Activated CD4-positive, alpha-beta T cell treated with anti-CD3 and anti-CD28 coated beads for 36 hours (primary cell): ENCODE measurements at regions of chr3 and their contacts with region 1.

Region 1: GRCh38 chr3:87260270-87260669 is 16.1 kb downstream of the POU1F1 start:
- DNase-seq: peak; percentile 62
- ATAC-seq: peak; percentile 44
- H3K4me3 Mint-ChIP-seq: no peak overlapping the region
- H3K27ac Mint-ChIP-seq: no peak overlapping the region
- H3K4me1 Mint-ChIP-seq: peaks cover 3% of the 10 kb centered on the region
- H3K27me3 Mint-ChIP-seq: no peaks in the 10 kb centered on the region

Region 2: DNA sequence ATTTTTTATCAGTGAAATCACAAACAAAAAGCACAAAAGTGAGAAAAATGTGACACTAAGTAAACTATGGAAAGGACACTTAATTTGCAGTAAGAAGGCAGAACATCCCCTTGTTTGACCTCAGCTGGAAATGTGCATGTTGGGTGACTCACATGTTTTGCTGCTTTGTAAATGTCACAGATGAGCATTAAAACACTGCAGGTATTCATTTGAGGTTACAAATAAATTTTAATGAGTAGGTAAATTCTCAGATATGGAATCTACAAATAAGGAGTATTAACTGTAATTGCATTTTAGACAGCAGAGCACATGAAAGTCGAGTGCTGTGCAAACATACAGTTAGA is 12.9 kb before region 1 on chr3:
- CTCF ChIA-PET with region 1: interaction called, 20 read pairs
- POLR2A ChIA-PET with region 1: no interaction called
- intact Hi-C with region 1: no loop called
- DNase-seq: no peak
- ATAC-seq: peak; percentile 26
- H3K4me3 Mint-ChIP-seq: no peak overlapping the region
- H3K27ac Mint-ChIP-seq: no peak overlapping the region
- H3K4me1 Mint-ChIP-seq: peaks cover 11% of the 10 kb centered on the region
- H3K27me3 Mint-ChIP-seq: no peaks in the 10 kb centered on the region

Region 3: DNA sequence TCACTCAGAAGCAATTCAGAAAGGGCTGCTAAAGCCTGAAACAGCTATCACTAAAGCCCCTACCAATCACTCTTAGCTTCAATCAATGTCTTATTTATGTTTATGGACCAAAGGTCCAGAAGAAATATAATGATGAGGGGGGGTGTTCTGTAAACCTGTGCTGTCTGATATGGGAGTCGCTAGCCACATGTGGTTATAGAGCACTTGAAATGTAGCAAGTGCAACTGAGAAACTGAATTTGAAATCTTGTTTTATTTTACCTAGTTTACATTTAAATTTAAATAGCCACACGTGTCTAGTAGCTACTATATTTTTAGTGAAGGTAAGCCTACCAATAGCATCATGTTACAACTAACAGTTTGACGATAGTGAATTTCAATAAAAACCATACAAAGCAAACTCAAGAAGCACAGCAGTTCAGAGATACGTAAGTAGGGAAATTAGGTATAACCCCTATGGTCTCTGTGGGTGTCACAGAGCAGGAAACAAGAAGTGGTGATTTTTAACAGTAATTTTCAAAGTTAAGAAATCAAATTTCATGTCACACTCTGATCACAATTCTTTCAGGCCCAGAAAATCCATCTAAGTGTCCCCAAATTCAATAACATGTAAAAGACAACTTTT is 12.6 kb after region 1 on chr3:
- CTCF ChIA-PET with region 1: interaction called, 28 read pairs
- POLR2A ChIA-PET with region 1: no interaction called
- intact Hi-C with region 1: no loop called
- DNase-seq: no peak
- ATAC-seq: peak; percentile 74
- H3K4me3 Mint-ChIP-seq: no peak overlapping the region
- H3K27ac Mint-ChIP-seq: no peak overlapping the region
- H3K4me1 Mint-ChIP-seq: peaks cover 26% of the 10 kb centered on the region
- H3K27me3 Mint-ChIP-seq: peaks cover 2% of the 10 kb centered on the region

Region 4: GRCh38 chr3:87307803-87308202 is 47.5 kb after region 1 on chr3:
- CTCF ChIA-PET with region 1: no interaction called
- POLR2A ChIA-PET with region 1: no interaction called
- intact Hi-C with region 1: no loop called
- DNase-seq: no peak
- ATAC-seq: no peak
- H3K4me3 Mint-ChIP-seq: no peak overlapping the region
- H3K27ac Mint-ChIP-seq: no peak overlapping the region
- H3K4me1 Mint-ChIP-seq: peaks cover 4% of the 10 kb centered on the region
- H3K27me3 Mint-ChIP-seq: peaks cover 8% of the 10 kb centered on the region

Region 5: DNA sequence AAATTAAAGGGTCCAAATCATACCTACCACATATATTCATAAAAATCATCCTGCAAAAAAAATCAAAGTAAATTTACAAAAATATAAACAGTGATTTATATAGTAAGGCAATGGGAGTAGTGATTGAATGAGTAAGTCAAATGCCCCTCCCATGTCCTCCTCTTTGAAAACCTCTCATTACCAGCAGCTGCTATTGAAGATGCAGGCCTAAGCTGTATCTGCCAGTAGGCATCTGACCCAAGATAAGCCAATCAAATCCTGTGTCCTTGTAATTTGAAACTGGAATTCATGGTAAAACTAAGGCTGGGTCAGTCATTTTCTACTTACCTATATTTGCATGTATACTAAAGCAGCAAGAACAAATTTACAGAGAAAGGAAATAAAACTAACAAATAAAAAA is 76.5 kb after region 1 on chr3:
- CTCF ChIA-PET with region 1: no interaction called
- POLR2A ChIA-PET with region 1: no interaction called
- intact Hi-C with region 1: no loop called
- DNase-seq: no peak
- ATAC-seq: no peak
- H3K4me3 Mint-ChIP-seq: no peak overlapping the region
- H3K27ac Mint-ChIP-seq: no peak overlapping the region
- H3K4me1 Mint-ChIP-seq: peaks cover 13% of the 10 kb centered on the region
- H3K27me3 Mint-ChIP-seq: peaks cover 2% of the 10 kb centered on the region

Region 6: DNA sequence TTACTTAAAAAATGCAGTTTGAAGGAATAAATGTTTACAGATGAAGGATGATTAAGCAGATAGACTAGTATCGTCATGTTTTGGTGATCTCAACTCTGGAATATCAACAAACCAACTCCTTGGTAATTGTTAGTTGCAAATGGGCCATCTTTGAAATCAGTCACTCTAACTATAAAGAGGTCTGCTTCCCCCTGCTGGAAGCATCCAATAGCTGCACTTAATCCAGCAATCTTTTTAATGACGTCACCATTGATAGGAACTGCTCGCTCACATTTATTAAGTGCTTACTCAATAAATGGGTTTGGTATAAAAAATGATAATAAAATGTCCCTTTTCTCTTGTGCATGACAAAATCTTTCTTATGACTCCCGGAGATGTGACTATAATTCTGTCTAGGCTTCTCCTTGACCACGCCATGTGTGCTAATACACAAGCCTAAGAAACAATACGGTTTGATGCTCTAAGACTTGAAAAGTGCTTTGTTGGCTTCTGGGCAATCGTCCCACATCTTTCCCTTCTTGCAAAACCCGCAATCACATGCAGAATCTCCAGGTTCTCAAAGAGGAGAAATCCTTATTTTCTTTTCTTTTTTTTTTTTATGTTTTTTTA is 243.7 kb after region 1 on chr3:
- CTCF ChIA-PET with region 1: interaction called, 3 read pairs
- POLR2A ChIA-PET with region 1: no interaction called
- intact Hi-C with region 1: loop called in 1 of 2 experiments (anchors 1 kb)
- DNase-seq: peak; percentile 16
- ATAC-seq: no peak
- H3K4me3 Mint-ChIP-seq: no peak overlapping the region
- H3K27ac Mint-ChIP-seq: no peak overlapping the region
- H3K4me1 Mint-ChIP-seq: no peaks in the 10 kb centered on the region
- H3K27me3 Mint-ChIP-seq: no peaks in the 10 kb centered on the region

Region 7: DNA sequence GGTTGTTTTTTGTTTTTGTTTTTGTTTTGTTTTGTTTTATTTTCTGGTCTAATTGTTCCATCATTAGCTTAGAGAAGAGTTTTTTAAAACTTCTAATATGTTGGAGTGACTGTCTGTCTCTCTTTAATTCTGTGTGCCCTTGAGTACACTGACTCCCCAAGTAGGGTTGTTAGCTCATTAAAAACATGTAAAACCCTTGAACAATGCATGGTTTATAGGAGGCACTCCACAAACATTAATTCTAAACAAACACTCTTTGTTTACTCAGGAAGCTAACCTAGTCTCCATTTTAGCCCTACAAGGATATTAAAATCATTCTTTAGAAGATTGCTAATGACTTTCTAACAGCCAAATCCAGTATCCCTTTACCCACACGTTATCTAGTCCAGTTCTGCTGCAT is 698.0 kb after region 1 on chr3:
- CTCF ChIA-PET with region 1: no interaction called
- POLR2A ChIA-PET with region 1: no interaction called
- intact Hi-C with region 1: no loop called
- DNase-seq: no peak
- ATAC-seq: no peak
- H3K4me3 Mint-ChIP-seq: no peak overlapping the region
- H3K27ac Mint-ChIP-seq: no peak overlapping the region
- H3K4me1 Mint-ChIP-seq: no peaks in the 10 kb centered on the region
- H3K27me3 Mint-ChIP-seq: peaks cover 12% of the 10 kb centered on the region